Activated T-helper 2 cell treated with anti-CD3 and anti-CD28 coated beads, Interferon-gamma antibody, Interleukin-2, Interleukin-4, amounts not matched to agents 10 μg/mL and 5 μg/mL and 100 μg/mL, durations not matched to agents 14 hours and 24 hours and 36 hours (primary cell): ENCODE measurements at regions of chr5 and their contacts with region 1.

Region 1: DNA sequence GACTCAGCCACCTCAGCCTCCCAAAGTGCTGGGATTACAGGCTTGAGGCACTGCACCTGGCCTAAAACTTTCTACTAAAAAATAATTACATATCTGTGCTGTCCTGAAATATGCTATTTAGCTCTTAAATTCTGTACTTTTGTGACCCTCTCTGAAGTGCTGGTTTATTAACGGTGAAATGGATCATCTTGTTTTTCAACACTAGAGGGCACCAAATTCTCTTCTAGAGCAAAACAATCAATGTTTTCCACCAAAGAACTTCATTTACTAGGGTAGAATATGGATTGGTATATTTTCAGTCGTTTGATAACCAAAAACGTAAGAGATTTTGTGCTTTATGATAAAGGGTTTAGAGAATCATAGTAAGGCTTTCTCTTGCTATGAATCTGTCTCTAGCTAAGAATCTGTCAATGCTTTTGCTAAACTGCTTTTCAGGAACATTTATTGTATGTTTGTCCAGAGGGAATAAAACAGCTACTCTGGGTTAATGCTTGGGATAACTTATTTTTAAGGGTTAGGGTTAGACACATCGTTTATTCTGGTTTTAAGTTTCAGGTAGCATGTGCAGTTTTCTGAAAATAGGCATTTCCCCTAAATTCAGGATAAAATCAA is 63.6 kb downstream of the RNF180 start:
- DNase-seq: no peak
- H3K4me3 Mint-ChIP-seq: no peak overlapping the region
- H3K27ac Mint-ChIP-seq: no peak overlapping the region
- H3K4me1 Mint-ChIP-seq: no peaks in the 10 kb centered on the region
- H3K27me3 Mint-ChIP-seq: no peaks in the 10 kb centered on the region

Region 2: DNA sequence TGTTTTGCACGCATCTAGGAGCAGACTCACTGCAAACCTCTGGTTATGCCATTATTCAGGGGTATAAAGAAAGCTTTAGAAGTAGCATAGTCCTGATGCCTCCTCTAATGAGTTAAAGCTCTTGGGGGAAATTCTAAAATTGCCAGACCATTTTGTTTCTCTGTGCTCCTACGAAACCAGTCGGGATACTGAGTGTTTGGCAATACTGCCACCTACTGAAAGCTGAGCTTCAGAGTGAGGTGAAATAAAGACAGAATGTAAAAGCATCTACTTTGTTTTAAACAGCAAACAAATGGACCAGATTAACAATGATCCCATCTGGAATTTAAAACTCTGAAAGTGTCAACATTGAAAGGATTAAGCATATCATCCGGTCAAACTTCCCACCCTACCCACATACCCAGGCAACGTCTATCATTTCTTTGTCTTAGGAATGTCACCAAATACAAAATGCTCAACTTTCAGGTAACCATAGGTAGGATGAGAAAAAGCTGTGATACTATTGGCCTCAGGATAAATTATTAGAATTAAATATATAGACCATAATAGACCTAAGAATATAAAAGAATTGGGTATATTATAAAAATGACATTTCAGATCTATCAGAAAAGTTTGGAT is 383.2 kb after region 1 on chr5:
- intact Hi-C with region 1: loop called (anchors 2 kb)
- DNase-seq: no peak
- H3K4me3 Mint-ChIP-seq: no peak overlapping the region
- H3K27ac Mint-ChIP-seq: no peak overlapping the region
- H3K4me1 Mint-ChIP-seq: no peaks in the 10 kb centered on the region
- H3K27me3 Mint-ChIP-seq: peaks cover 16% of the 10 kb centered on the region

Region 3: GRCh38 chr5:64883912-64884311 is 654.6 kb after region 1 on chr5:
- intact Hi-C with region 1: no loop called
- DNase-seq: no peak
- H3K4me3 Mint-ChIP-seq: no peak overlapping the region
- H3K27ac Mint-ChIP-seq: no peak overlapping the region
- H3K4me1 Mint-ChIP-seq: no peaks in the 10 kb centered on the region
- H3K27me3 Mint-ChIP-seq: no peaks in the 10 kb centered on the region